Panc1 (cell line): ENCODE measurements at regions of chr16 and their contacts with region 1.

Region 1: DNA sequence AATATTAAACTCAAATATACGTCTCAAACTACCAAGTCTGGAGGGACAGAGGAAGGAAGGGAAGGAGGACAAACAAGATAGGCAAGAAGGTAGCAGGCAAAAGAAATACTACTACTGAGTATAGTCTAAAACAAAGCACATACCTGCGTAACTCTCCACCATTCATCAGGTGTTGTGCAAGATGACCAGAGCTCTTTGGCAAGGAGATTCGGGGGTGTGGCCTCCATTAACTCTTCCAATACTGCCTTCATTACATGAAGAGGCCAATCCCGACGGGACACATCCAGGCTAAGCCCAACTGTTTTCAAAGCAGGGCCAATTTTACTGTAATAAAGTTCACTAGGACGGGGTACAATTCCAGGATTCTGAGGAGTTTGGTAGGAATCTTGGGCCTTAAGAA is 38.2 kb upstream of the ARL6IP1 start:
- DNase-seq: no peak
- ATAC-seq: no peak
- H3K4me3 ChIP-seq: no peak overlapping the region
- H3K27ac ChIP-seq: no peak overlapping the region
- H3K4me1 ChIP-seq: no peaks in the 10 kb centered on the region
- H3K27me3 ChIP-seq: no peaks in the 10 kb centered on the region
- CTCF ChIP-seq: no peak

Region 2: GRCh38 chr16:18853694-18854093 is 14.1 kb after region 1 on chr16:
- CTCF ChIA-PET with region 1: no interaction called
- POLR2A ChIA-PET with region 1: no interaction called
- in situ Hi-C with region 1: no loop called
- intact Hi-C with region 1: no loop called
- DNase-seq: no peak
- ATAC-seq: no peak
- H3K4me3 ChIP-seq: no peak overlapping the region
- H3K27ac ChIP-seq: no peak overlapping the region
- H3K4me1 ChIP-seq: no peaks in the 10 kb centered on the region
- H3K27me3 ChIP-seq: no peaks in the 10 kb centered on the region
- CTCF ChIP-seq: no peak

Region 3: DNA sequence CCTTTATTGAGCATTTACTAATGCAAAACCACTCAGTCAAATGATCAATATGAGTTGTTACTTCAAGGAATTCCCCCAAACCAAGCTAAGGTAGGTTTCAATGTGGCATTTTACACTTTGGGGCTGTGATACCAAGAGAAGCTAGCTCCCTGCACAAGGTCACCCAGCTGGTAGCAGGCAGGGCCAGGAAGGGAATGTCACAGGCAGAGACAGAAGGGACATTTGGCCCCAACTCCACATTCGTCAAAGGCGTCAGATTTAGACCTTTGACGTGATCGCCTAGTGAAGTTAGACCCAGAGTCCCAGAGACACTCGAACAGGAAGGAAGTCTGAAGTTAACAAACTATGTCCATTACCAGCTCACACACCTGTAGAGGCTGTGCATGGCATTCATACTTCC is 92.2 kb after region 1 on chr16:
- CTCF ChIA-PET with region 1: no interaction called
- POLR2A ChIA-PET with region 1: no interaction called
- in situ Hi-C with region 1: no loop called
- intact Hi-C with region 1: no loop called
- DNase-seq: no peak
- ATAC-seq: no peak
- H3K4me3 ChIP-seq: no peak overlapping the region
- H3K27ac ChIP-seq: no peak overlapping the region
- H3K4me1 ChIP-seq: peaks cover 12% of the 10 kb centered on the region; the same call in 1 of the 2 replicates
- H3K27me3 ChIP-seq: no peaks in the 10 kb centered on the region
- CTCF ChIP-seq: no peak

Region 4: DNA sequence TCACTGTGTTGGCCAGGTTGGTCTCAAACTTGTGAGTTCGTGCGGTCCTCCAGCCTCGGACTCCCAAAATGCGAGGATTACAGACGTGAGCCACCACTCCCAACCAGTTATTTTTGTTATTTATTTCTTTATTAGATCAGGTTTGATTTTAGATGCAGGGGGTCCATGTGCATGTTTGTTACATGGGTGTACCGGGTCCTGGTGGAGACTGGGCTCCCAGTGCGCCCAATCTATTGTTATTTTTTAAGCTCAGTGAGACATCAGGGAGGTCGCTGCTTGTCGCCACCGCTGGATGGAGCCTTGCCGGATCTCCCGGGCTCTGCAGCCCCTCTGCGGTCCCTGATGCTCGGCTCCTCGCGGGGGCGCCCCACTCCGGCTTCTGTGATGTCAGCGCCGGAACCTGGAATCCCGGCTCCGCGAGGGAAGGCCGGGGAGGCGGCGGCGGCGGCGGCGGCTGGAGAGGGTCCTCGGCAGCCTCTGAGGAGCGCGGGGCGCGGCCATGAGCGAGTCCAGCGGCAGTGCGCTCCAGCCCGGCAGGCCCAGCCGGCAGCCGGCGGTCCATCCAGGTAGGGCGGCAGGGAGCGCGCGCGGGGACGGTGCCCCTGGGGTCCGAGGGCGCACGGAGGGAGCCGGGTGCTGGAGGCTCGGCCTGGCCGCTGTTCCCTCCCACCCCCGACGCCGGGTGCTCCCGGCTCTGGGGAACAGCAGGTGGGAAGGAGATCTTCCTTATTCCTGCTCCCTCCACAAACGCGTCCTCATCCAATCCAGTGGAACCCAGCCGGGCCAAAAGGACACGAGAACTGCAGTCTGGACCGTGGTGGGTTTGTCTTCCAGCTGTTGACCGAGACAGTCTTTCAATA is 144.2 kb after region 1 on chr16 and contains the start of gene TMC7:
- CTCF ChIA-PET with region 1: no interaction called
- POLR2A ChIA-PET with region 1: no interaction called
- in situ Hi-C with region 1: loop called (anchors 10 kb)
- intact Hi-C with region 1: no loop called
- DNase-seq: peak; percentile 74
- ATAC-seq: peak; percentile 99
- H3K4me3 ChIP-seq: peak within 1 kb of the TSS; percentile 58 to 98
- H3K27ac ChIP-seq: peak within 1 kb of the TSS; percentile 87
- H3K4me1 ChIP-seq: peaks cover 6% of the 10 kb centered on the region; the same call in 1 of the 2 replicates
- H3K27me3 ChIP-seq: no peaks in the 10 kb centered on the region
- CTCF ChIP-seq: peak; percentile 100
- total RNA-seq, gene TMC7: 5.1 TPM

Region 5: GRCh38 chr16:20484726-20485125 is 1645.2 kb after region 1 on chr16:
- CTCF ChIA-PET with region 1: no interaction called
- POLR2A ChIA-PET with region 1: no interaction called
- in situ Hi-C with region 1: no loop called
- intact Hi-C with region 1: no loop called
- DNase-seq: no peak
- ATAC-seq: no peak
- H3K4me3 ChIP-seq: no peak overlapping the region
- H3K27ac ChIP-seq: no peak overlapping the region
- H3K4me1 ChIP-seq: no peaks in the 10 kb centered on the region
- H3K27me3 ChIP-seq: no peaks in the 10 kb centered on the region
- CTCF ChIP-seq: no peak